Activated B cell treated with CpG ODN at 0.5 μM for 24 hours (primary cell): ENCODE measurements at regions of chr1 and their contacts with region 1.

Region 1: DNA sequence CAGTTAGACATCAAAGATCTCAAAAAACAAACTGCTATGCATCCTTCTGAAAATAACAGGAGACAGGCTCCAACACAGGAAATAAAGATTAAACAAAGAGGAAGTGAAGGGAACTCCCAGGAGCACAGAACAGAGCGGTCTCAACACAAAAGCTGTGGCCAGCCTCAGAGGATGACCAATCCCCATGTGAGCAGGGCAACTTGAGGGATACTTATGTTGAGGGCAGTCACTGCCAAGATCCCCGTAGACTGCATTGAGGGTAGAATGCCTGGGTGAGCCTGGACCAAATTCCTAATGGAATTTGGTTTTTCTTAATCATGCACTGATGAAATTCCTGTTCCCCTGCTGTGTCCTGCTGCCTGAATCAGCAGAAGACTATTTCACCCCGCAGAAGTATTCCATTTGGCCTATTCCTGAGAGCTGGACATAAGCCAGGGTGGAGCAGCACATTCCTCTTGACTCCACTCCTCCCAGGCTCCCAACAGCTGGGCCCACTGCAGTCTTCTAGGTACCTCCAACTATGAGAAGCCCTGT is 49.0 kb downstream of the JAK1 start:
- DNase-seq: no peak
- ATAC-seq: peak; percentile 14
- H3K4me3 Mint-ChIP-seq: peak overlapping the region; percentile 63
- H3K27ac Mint-ChIP-seq: peak overlapping the region; percentile 80
- H3K4me1 Mint-ChIP-seq: peaks cover 93% of the 10 kb centered on the region
- H3K27me3 Mint-ChIP-seq: no peaks in the 10 kb centered on the region
- CTCF ChIP-seq: no peak

Region 2: DNA sequence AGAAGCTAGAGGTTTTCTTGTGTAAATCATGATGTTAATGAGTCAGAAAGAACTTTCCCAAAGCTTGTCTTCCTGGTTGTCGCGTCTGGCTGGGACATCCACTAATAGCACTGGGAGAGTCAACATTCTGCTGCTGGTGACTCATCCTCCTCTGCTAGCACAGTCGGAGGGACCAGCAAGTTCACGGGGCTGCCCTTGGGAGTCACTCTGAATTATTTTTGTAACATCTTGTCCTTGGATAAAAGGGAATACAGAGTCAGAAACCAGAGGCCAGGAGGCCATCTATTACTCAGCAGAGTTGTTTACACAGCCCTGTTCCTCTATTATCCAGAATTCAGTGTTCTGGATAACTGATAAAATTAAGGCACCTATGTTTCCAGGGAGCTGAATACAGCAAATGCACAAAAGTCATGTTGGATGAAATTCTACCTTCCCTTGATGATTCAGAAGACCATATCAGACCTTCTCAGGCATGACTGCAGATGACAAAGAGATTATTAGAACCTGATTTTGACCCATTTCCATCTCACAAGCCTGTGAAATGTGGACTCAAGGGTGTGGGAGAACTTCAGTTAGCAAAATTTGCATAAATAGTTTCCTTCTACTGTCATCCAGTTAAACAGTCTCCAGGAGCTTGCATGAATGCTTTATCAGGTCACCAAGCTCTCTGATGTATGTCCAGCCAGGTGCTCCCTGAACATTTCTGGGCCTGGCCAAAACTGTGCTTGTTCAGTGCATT is 19.1 kb before region 1 on chr1:
- CTCF ChIA-PET with region 1: no interaction called
- POLR2A ChIA-PET with region 1: no interaction called
- intact Hi-C with region 1: loop called (anchors 2 kb)
- DNase-seq: no peak
- ATAC-seq: peak; percentile 69
- H3K4me3 Mint-ChIP-seq: peak overlapping the region; percentile 42
- H3K27ac Mint-ChIP-seq: peak overlapping the region; percentile 48
- H3K4me1 Mint-ChIP-seq: peaks cover 97% of the 10 kb centered on the region
- H3K27me3 Mint-ChIP-seq: no peaks in the 10 kb centered on the region
- CTCF ChIP-seq: no peak